ENCODE measurements at regions of chr6 and their contacts with region 1.

Region 1: GRCh38 chr6:55276745-55277530 is 50.3 kb upstream of the GFRAL start:
- DNase-seq: peak; percentile 64
- H3K4me3 ChIP-seq: no peak overlapping the region
- H3K27ac ChIP-seq: no peak overlapping the region
- H3K4me1 ChIP-seq: no peaks in the 10 kb centered on the region
- H3K27me3 ChIP-seq: peaks cover 0 to 2% of the 10 kb centered on the region in 2 experiments
- CTCF ChIP-seq: peak; percentile 47 to 56
- POLR2A ChIP-seq: no peak

Region 2: GRCh38 chr6:55250400-55250799 is 26.5 kb before region 1 on chr6:
- CTCF ChIA-PET with region 1: interaction called, 11 read pairs
- POLR2A ChIA-PET with region 1: no interaction called
- dilution Hi-C with region 1: no loop called
- intact Hi-C with region 1: no loop called
- DNase-seq: no peak
- H3K4me3 ChIP-seq: no peak overlapping the region
- H3K27ac ChIP-seq: no peak overlapping the region
- H3K4me1 ChIP-seq: no peaks in the 10 kb centered on the region
- H3K27me3 ChIP-seq: peaks cover 1 to 2% of the 10 kb centered on the region in 2 experiments
- CTCF ChIP-seq: no peak
- POLR2A ChIP-seq: no peak

Region 3: DNA sequence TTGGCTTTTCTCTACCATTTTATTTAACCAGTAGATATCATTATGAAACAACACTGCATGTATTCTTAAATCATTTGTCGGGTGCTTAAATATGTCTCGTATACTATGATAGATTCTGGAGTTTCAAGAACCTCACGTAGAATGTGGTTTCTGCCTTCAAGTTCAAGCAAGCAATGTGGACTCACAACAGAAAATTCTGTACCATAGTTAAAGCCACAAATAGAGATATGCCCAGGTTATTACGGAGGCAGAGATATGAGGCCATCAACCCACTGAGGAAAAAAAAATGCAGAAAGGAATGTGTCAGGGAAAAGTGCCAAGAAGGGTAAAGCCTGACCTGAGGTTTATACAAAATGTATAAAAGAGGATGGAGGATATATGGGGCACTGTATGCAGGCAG is 160.2 kb after region 1 on chr6:
- CTCF ChIA-PET with region 1: interaction called, 14 read pairs
- POLR2A ChIA-PET with region 1: no interaction called
- dilution Hi-C with region 1: no loop called
- intact Hi-C with region 1: no loop called
- DNase-seq: no peak
- H3K4me3 ChIP-seq: no peak overlapping the region
- H3K27ac ChIP-seq: no peak overlapping the region
- H3K4me1 ChIP-seq: no peaks in the 10 kb centered on the region
- H3K27me3 ChIP-seq: peaks cover 2 to 8% of the 10 kb centered on the region in 2 experiments
- CTCF ChIP-seq: no peak
- POLR2A ChIP-seq: no peak

Region 4: GRCh38 chr6:55886185-55886836 is 609.4 kb after region 1 on chr6:
- CTCF ChIA-PET with region 1: interaction called, 20 read pairs
- POLR2A ChIA-PET with region 1: no interaction called
- dilution Hi-C with region 1: no loop called
- intact Hi-C with region 1: loop called (anchors 2 kb)
- DNase-seq: peak; percentile 30
- H3K4me3 ChIP-seq: no peak overlapping the region
- H3K27ac ChIP-seq: no peak overlapping the region
- H3K4me1 ChIP-seq: peaks cover 18% of the 10 kb centered on the region
- H3K27me3 ChIP-seq: no peaks in the 10 kb centered on the region
- CTCF ChIP-seq: peak in 1 of 2 donors; percentile 13
- POLR2A ChIP-seq: no peak

Region 5: GRCh38 chr6:55953335-55953734 is 676.4 kb after region 1 on chr6:
- CTCF ChIA-PET with region 1: interaction called, 57 read pairs
- POLR2A ChIA-PET with region 1: no interaction called
- dilution Hi-C with region 1: no loop called
- intact Hi-C with region 1: loop called (anchors 2 kb)
- DNase-seq: peak; percentile 51
- H3K4me3 ChIP-seq: no peak overlapping the region
- H3K27ac ChIP-seq: no peak overlapping the region
- H3K4me1 ChIP-seq: no peaks in the 10 kb centered on the region
- H3K27me3 ChIP-seq: no peaks in the 10 kb centered on the region
- CTCF ChIP-seq: no peak
- POLR2A ChIP-seq: no peak

Measured in endothelial cell of umbilical vein (primary cell).